Caki2 (cell line): ENCODE measurements at regions of chr11 and their contacts with region 1.

Region 1: GRCh38 chr11:10844796-10845195 is 13.1 kb downstream of the ZBED5 start:
- DNase-seq: no peak

Region 2: DNA sequence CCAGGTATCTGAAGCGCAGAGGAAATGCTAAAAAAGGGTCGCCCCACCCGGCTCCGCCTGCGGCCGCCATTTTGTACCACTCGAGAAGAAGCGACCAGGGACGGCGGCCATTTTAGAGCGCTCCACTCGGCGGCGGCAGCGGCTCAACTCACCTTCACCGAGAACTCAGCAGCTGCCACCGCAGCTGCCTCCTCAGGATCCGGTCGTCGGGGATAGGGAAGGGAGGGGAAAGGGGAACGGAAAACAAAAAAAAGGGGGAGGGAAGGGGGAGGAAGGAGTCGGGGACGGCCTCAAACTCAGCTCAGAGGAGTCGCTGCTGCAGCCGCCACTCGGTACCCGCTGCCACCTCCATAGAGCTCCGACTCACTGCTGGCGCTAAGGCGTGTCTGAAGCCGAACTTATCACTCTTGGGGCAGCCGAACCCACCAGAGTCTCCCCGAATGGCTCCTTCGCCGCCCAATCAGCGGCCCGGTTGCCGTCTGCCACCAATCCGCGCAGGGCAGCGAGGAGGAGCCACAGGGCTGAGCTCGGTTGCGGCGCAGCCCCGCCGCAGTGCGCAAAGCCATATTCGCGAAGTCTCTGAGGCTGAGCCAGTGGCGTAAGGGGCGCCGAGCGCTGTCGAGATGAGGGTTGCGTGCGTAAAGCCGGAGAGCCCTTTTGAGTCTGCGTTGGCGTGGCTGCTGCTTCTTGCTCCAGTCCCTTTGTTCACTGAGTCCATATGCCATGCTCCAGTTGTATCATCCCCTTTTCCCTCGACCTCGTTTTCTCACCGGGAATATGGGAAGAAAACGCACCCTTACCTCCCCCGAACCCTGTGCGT is 36.0 kb before region 1 on chr11 and contains the start of gene EIF4G2:
- in situ Hi-C with region 1: loop called (anchors 5 kb)
- DNase-seq: peak; percentile 98
- total RNA-seq, gene EIF4G2: 393 and 414 TPM in 2 replicates

Region 3: GRCh38 chr11:11243590-11244469 is 399.0 kb after region 1 on chr11:
- in situ Hi-C with region 1: no loop called
- DNase-seq: no peak